ENCODE measurements at regions of chr5 and their contacts with region 1.

Region 1: GRCh38 chr5:42889311-42889933 is 77.7 kb upstream of the SELENOP start:
- DNase-seq: peak; percentile 41
- H3K4me3 Mint-ChIP-seq: no peak overlapping the region
- H3K27ac Mint-ChIP-seq: no peak overlapping the region
- H3K4me1 Mint-ChIP-seq: no peaks in the 10 kb centered on the region
- H3K27me3 Mint-ChIP-seq: peaks cover 18% of the 10 kb centered on the region

Region 2: GRCh38 chr5:42005561-42006153 is 883.8 kb before region 1 on chr5:
- intact Hi-C with region 1: loop called (anchors 5 kb)
- DNase-seq: no peak
- H3K4me3 Mint-ChIP-seq: no peak overlapping the region
- H3K27ac Mint-ChIP-seq: no peak overlapping the region
- H3K4me1 Mint-ChIP-seq: no peaks in the 10 kb centered on the region
- H3K27me3 Mint-ChIP-seq: peaks cover 4% of the 10 kb centered on the region

Region 3: GRCh38 chr5:42057254-42057690 is 832.1 kb before region 1 on chr5:
- intact Hi-C with region 1: loop called (anchors 5 kb)
- DNase-seq: peak; percentile 31
- H3K4me3 Mint-ChIP-seq: no peak overlapping the region
- H3K27ac Mint-ChIP-seq: no peak overlapping the region
- H3K4me1 Mint-ChIP-seq: no peaks in the 10 kb centered on the region
- H3K27me3 Mint-ChIP-seq: peaks cover 6% of the 10 kb centered on the region

Region 4: GRCh38 chr5:42423285-42424165 is 465.9 kb before region 1 on chr5 and contains the start of gene GHR:
- intact Hi-C with region 1: loop called (anchors 10 kb)
- DNase-seq: no peak
- H3K4me3 Mint-ChIP-seq: no peak within 1 kb of the TSS
- H3K27ac Mint-ChIP-seq: no peak within 1 kb of the TSS
- H3K4me1 Mint-ChIP-seq: no peaks in the 10 kb centered on the region
- H3K27me3 Mint-ChIP-seq: peaks cover 10% of the 10 kb centered on the region
- total RNA-seq, gene GHR: not detected in 2 replicates

Region 5: DNA sequence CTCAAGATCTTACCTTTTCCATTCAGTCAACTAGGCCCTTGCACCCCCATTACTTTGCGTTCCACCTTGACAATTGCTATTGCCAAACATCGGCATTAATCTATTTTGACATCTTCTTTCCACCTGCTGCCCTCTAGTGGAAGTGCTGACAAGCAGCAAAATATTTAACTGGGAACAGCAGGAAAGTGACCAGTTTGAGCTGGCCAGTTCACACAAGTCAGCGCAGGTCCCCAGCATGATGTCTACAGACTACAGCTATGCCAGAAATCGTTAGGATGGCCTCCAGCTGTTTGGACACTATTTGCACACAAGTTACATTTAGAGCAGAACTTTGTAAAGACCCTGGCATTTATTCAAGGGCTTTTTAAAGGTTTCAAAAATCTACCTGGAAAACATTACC is 306.1 kb before region 1 on chr5:
- intact Hi-C with region 1: loop called (anchors 5 kb)
- DNase-seq: peak; percentile 4
- H3K4me3 Mint-ChIP-seq: no peak overlapping the region
- H3K27ac Mint-ChIP-seq: no peak overlapping the region
- H3K4me1 Mint-ChIP-seq: no peaks in the 10 kb centered on the region
- H3K27me3 Mint-ChIP-seq: peaks cover 13% of the 10 kb centered on the region

Region 6: GRCh38 chr5:42767491-42768105 is 121.8 kb before region 1 on chr5:
- intact Hi-C with region 1: loop called (anchors 5 kb)
- DNase-seq: no peak
- H3K4me3 Mint-ChIP-seq: no peak overlapping the region
- H3K27ac Mint-ChIP-seq: no peak overlapping the region
- H3K4me1 Mint-ChIP-seq: no peaks in the 10 kb centered on the region
- H3K27me3 Mint-ChIP-seq: peaks cover 10% of the 10 kb centered on the region

Region 7: GRCh38 chr5:43313035-43313853 is 423.8 kb after region 1 on chr5 and contains the start of gene HMGCS1:
- intact Hi-C with region 1: no loop called
- DNase-seq: peak; percentile 99
- H3K4me3 Mint-ChIP-seq: peak within 1 kb of the TSS; percentile 93
- H3K27ac Mint-ChIP-seq: peak within 1 kb of the TSS; percentile 98
- H3K4me1 Mint-ChIP-seq: peaks cover 73% of the 10 kb centered on the region
- H3K27me3 Mint-ChIP-seq: no peaks in the 10 kb centered on the region
- total RNA-seq, gene HMGCS1: 216 and 218 TPM in 2 replicates